ENCODE measurements at regions of chr12 and their contacts with region 1.

Region 1: GRCh38 chr12:102061560-102062418 is at the start of gene WASHC3:
- DNase-seq: peak; percentile 92 to 97 (median 94)
- ATAC-seq: peak; percentile 90
- H3K4me3 ChIP-seq: peak within 1 kb of the TSS; percentile 72 to 98
- H3K4me3 Mint-ChIP-seq: peak within 1 kb of the TSS; percentile 88
- H3K27ac ChIP-seq: peak within 1 kb of the TSS; percentile 90 to 97
- H3K27ac Mint-ChIP-seq: peak within 1 kb of the TSS; percentile 97
- H3K4me1 ChIP-seq: peaks cover 12% of the 10 kb centered on the region
- H3K4me1 Mint-ChIP-seq: peaks cover 46% of the 10 kb centered on the region
- H3K27me3 ChIP-seq: no peaks in the 10 kb centered on the region
- H3K27me3 Mint-ChIP-seq: no peaks in the 10 kb centered on the region
- CTCF ChIP-seq: no peak
- total RNA-seq, gene WASHC3: 19.8 to 21.6 TPM

Region 2: GRCh38 chr12:100266835-100267618 is 1794.8 kb before region 1 on chr12 and contains the starts of genes DEPDC4 and SCYL2:
- CTCF ChIA-PET with region 1: no interaction called
- POLR2A ChIA-PET with region 1: no interaction called
- intact Hi-C with region 1: loop called (anchors 5 kb)
- DNase-seq: peak; percentile 84 to 97 (median 93)
- ATAC-seq: peak; percentile 93
- H3K4me3 ChIP-seq: peak within 1 kb of the TSS; percentile 81 to 96
- H3K4me3 Mint-ChIP-seq: peak within 1 kb of the TSS; percentile 99
- H3K27ac ChIP-seq: peak within 1 kb of the TSS; percentile 92 to 95
- H3K27ac Mint-ChIP-seq: peak within 1 kb of the TSS; percentile 98
- H3K4me1 ChIP-seq: peaks cover 19% of the 10 kb centered on the region
- H3K4me1 Mint-ChIP-seq: peaks cover 43% of the 10 kb centered on the region
- H3K27me3 ChIP-seq: no peaks in the 10 kb centered on the region
- H3K27me3 Mint-ChIP-seq: no peaks in the 10 kb centered on the region
- CTCF ChIP-seq: no peak
- total RNA-seq, gene DEPDC4: 0.33 TPM in 1 of 2 experiments, not detected in the other
- total RNA-seq, gene SCYL2: 40.9 to 48.4 TPM

Region 3: GRCh38 chr12:101407436-101408345 is 654.1 kb before region 1 on chr12 and contains the start of gene ARL1:
- CTCF ChIA-PET with region 1: no interaction called
- POLR2A ChIA-PET with region 1: no interaction called
- intact Hi-C with region 1: loop called (anchors 5 to 10 kb)
- DNase-seq: peak; percentile 47 to 87 (median 76)
- ATAC-seq: peak; percentile 82
- H3K4me3 ChIP-seq: peak within 1 kb of the TSS; percentile 90 to 98
- H3K4me3 Mint-ChIP-seq: peak within 1 kb of the TSS; percentile 97
- H3K27ac ChIP-seq: peak within 1 kb of the TSS; percentile 84 to 85
- H3K27ac Mint-ChIP-seq: peak within 1 kb of the TSS; percentile 96
- H3K4me1 ChIP-seq: peaks cover 19% of the 10 kb centered on the region
- H3K4me1 Mint-ChIP-seq: peaks cover 32% of the 10 kb centered on the region
- H3K27me3 ChIP-seq: no peaks in the 10 kb centered on the region
- H3K27me3 Mint-ChIP-seq: no peaks in the 10 kb centered on the region
- CTCF ChIP-seq: no peak
- total RNA-seq, gene ARL1: 24.7 to 29.3 TPM

Region 4: DNA sequence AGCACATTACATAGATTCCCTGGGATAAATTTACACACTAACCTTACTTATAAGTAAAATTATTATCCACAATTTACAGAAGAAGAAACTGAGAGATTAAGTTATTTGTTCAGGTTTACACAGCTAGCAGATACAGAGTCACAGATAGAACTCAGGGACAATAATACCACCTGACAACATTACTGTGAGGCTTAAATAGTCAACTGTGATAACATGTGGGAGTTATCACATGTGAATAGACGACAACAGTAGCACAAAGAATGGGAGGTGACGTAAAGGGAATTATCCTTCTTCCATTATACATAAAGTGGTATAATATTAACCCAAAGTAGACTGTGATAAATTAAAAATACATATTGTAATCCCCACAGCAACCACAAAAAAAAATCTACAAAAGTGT is 592.8 kb before region 1 on chr12:
- CTCF ChIA-PET with region 1: no interaction called
- POLR2A ChIA-PET with region 1: no interaction called
- intact Hi-C with region 1: no loop called
- DNase-seq: no peak
- ATAC-seq: no peak
- H3K4me3 ChIP-seq: no peak overlapping the region
- H3K4me3 Mint-ChIP-seq: no peak overlapping the region
- H3K27ac ChIP-seq: no peak overlapping the region
- H3K27ac Mint-ChIP-seq: no peak overlapping the region
- H3K4me1 ChIP-seq: no peaks in the 10 kb centered on the region
- H3K4me1 Mint-ChIP-seq: no peaks in the 10 kb centered on the region
- H3K27me3 ChIP-seq: no peaks in the 10 kb centered on the region
- H3K27me3 Mint-ChIP-seq: peaks cover 4% of the 10 kb centered on the region
- CTCF ChIP-seq: no peak

Region 5: DNA sequence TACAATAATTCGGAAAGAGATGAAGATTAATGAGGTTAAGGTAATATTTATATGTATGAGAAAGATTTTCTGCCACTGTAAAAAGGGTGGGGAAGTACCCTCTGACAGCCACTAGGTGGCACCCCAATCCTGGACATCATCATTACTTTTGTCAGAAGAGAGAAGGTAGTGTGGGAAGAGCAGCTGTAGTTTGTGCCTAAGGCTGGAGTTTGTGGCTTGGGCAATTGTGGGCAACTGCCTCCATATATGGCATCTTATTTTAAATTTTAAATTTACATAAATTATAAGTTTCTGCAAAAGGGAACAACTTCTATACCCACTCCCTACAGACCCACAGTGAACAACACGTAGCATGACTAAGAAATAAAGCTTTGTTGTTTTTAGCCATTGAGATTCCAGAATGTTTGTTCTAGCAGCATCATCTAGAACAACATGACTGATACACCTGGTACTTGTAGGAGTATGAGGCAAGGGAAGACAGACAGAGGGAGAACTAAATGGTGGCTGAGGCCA is 288.1 kb before region 1 on chr12:
- CTCF ChIA-PET with region 1: no interaction called
- POLR2A ChIA-PET with region 1: no interaction called
- intact Hi-C with region 1: loop called in 1 of 2 experiments (anchors 5 kb)
- DNase-seq: peak; percentile 43 to 83 (median 70)
- ATAC-seq: peak; percentile 96
- H3K4me3 ChIP-seq: no peak overlapping the region
- H3K4me3 Mint-ChIP-seq: no peak overlapping the region
- H3K27ac ChIP-seq: no peak overlapping the region
- H3K27ac Mint-ChIP-seq: no peak overlapping the region
- H3K4me1 ChIP-seq: no peaks in the 10 kb centered on the region
- H3K4me1 Mint-ChIP-seq: no peaks in the 10 kb centered on the region
- H3K27me3 ChIP-seq: no peaks in the 10 kb centered on the region
- H3K27me3 Mint-ChIP-seq: no peaks in the 10 kb centered on the region
- CTCF ChIP-seq: peak; percentile 95

Region 6: DNA sequence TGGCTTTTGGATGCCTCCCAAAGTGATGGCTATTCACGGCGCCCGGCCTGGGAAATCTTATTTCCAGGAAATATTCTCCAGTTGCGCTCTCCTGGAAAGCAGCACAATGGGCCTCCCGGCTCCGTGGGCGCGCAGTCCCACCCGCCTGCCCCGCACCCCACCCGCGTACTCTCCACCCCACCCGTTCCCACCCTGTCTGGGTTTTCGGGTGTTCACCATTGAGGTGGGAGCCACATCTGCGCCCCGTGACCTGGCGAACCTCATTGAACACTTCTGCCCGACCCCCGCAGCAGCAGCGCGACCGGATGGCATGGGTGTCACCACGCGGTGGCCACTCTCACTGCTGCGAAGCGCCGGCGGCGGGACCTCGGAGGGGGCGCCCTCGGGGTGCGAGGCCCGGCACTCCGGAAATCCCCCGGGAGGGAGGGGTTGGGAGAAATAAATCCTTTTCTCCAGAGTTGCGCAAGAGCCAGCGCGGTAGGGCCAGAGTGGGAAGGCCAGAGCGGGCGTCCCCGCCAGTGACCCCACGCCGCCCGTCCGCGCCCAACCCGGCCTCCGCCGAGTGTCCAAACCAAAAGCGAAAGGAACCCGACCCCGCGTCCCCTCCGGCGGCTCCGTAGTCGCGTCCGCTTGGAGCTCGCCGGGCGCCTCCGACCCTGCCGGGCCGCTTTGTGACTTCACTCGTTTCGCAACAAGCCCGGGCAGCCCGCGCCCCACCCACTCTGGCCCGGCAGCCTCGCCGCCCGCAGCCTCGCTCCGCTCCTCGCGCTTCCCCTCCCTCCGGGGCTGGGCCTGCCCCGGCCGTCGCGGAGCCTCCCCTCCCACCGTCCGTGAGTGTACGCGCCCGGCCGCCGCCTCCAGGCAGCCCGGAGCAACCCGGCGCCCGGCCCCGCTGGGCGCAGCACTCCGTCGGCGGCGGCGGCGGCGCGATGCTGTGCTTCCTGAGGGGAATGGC is 184.7 kb before region 1 on chr12 and contains the start of gene DRAM1:
- CTCF ChIA-PET with region 1: no interaction called
- POLR2A ChIA-PET with region 1: no interaction called
- intact Hi-C with region 1: loop called (anchors 5 kb)
- DNase-seq: peak; percentile 43 to 89 (median 67)
- ATAC-seq: peak; percentile 79
- H3K4me3 ChIP-seq: peak within 1 kb of the TSS; percentile 78 to 90
- H3K4me3 Mint-ChIP-seq: peak within 1 kb of the TSS; percentile 91
- H3K27ac ChIP-seq: peak within 1 kb of the TSS; percentile 85 to 88
- H3K27ac Mint-ChIP-seq: peak within 1 kb of the TSS; percentile 77
- H3K4me1 ChIP-seq: peaks cover 7% of the 10 kb centered on the region
- H3K4me1 Mint-ChIP-seq: peaks cover 11% of the 10 kb centered on the region
- H3K27me3 ChIP-seq: no peaks in the 10 kb centered on the region
- H3K27me3 Mint-ChIP-seq: no peaks in the 10 kb centered on the region
- CTCF ChIP-seq: no peak
- total RNA-seq, gene DRAM1: 3.5 to 7.5 TPM

Region 7: DNA sequence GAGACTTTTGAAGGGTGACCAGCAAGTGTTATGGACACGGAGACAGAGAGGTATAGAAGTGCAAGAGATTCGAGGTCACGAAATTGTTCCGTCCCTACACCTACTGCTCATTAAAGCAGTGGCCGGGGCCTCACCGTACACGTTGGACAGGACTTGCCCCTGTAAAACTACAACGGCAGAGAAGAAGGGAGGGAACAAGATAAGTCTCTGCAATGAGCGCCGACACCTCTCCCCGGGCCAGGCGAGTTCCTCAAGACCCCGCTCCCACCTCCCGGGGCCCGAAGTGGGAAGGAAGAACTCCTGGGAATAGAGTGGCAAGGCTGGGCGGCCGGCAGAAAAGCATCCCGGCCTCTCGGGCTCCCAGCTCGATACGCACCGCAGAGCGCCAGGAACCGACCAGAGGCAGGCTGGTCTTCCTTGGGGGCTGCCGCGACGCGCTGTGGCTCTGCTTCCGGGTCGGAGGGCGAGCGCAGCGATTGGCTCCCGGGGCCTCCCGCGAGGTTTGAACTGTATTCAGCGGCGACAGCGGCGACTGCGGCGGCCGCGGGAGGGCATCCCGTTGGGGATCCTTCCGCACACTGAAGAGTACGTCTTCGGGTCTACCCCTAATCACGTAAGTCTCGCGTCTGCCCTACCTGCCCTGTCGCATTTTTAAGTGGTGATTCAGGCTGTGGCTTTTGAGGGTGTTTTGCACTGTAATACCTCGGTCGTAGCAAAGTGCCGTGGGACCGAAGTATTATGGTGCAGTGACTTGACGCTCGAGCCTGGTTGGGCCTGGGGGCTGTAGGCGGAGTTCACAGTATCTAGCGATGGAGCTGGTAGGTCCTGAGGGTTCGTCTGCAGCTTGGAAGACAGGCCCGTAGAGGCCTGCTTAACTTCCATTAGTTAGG is 58.1 kb after region 1 on chr12 and contains the starts of genes NUP37 and PARPBP:
- CTCF ChIA-PET with region 1: no interaction called
- POLR2A ChIA-PET with region 1: interaction called, 8 read pairs
- intact Hi-C with region 1: loop called (anchors 1 kb)
- DNase-seq: peak; percentile 86 to 95 (median 92)
- ATAC-seq: peak; percentile 86
- H3K4me3 ChIP-seq: peak within 1 kb of the TSS; percentile 65 to 91
- H3K4me3 Mint-ChIP-seq: peak within 1 kb of the TSS; percentile 85
- H3K27ac ChIP-seq: peak within 1 kb of the TSS; percentile 70 to 86
- H3K27ac Mint-ChIP-seq: peak within 1 kb of the TSS; percentile 95
- H3K4me1 ChIP-seq: peaks cover 14% of the 10 kb centered on the region
- H3K4me1 Mint-ChIP-seq: peaks cover 28% of the 10 kb centered on the region
- H3K27me3 ChIP-seq: no peaks in the 10 kb centered on the region
- H3K27me3 Mint-ChIP-seq: no peaks in the 10 kb centered on the region
- CTCF ChIP-seq: no peak
- total RNA-seq, gene NUP37: 8.8 to 11.3 TPM
- total RNA-seq, gene PARPBP: 1.8 to 2.4 TPM